ENCODE measurements at regions of chr15 and their contacts with region 1.

Region 1: GRCh38 chr15:82030176-82030687 is 15.6 kb downstream of the MEX3B start:
- DNase-seq: no peak
- H3K4me3 ChIP-seq: no peak overlapping the region
- CTCF ChIP-seq: no peak

Region 2: DNA sequence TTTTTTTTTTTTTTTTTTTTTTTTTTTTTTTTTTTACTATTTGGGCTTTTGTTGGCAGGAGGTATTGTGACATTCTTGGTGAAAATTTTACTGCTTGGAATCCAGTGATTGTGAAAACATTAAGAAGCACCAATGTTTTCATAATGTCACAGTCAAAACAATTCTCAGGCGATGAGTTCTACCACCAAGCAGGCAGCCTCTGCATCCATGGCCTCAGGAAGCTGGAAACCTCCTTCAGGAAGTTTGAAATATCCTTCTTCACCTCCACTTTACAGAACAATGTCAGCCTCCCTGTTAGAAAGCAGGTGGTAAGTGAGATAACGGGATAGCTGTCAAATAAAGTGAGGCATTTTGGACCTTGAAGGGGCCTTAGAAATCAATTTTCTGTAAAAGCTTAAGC is 82.7 kb before region 1 on chr15:
- in situ Hi-C with region 1: loop called (anchors 5 kb)
- DNase-seq: no peak
- H3K4me3 ChIP-seq: no peak overlapping the region
- CTCF ChIP-seq: no peak